ENCODE measurements at regions of chr1 and their contacts with region 1.

Region 1: GRCh38 chr1:9004700-9005394 is 21.4 kb downstream of the SLC2A7 start:
- DNase-seq: peak; percentile 29
- H3K4me3 ChIP-seq: no peak overlapping the region
- CTCF ChIP-seq: peak; percentile 97

Region 2: GRCh38 chr1:8858888-8859706 is 145.8 kb before region 1 on chr1:
- CTCF ChIA-PET with region 1: interaction called, 22 read pairs
- POLR2A ChIA-PET with region 1: no interaction called
- DNase-seq: no peak
- H3K4me3 ChIP-seq: no peak overlapping the region
- CTCF ChIP-seq: peak; percentile 60

Region 3: DNA sequence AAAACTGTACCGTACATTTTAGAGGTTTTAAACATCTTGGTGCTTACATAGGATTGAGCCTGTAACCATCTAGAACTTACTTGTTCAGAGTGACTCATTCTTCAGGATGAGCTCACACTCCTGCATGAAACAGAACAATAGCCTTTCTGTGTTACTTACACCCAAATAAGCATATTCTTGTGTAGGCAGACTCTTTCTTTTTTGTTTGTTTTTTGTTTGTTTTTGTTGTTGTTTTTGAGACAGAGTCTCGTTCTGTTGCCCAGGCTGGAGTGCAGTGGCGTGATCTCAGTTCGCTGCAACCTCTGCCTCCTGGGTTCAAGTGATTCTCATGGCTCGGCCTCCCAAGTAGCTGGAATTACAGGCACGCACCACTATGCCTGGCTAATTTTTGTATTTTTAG is 62.9 kb before region 1 on chr1:
- CTCF ChIA-PET with region 1: interaction called, 18 read pairs
- POLR2A ChIA-PET with region 1: no interaction called
- DNase-seq: peak; percentile 37
- H3K4me3 ChIP-seq: no peak overlapping the region
- CTCF ChIP-seq: no peak

Region 4: GRCh38 chr1:8987881-8988617 is 16.8 kb before region 1 on chr1:
- CTCF ChIA-PET with region 1: interaction called, 121 read pairs
- POLR2A ChIA-PET with region 1: no interaction called
- DNase-seq: no peak
- H3K4me3 ChIP-seq: no peak overlapping the region
- CTCF ChIP-seq: peak; percentile 86

Region 5: GRCh38 chr1:9025449-9025848 is 20.6 kb after region 1 on chr1:
- CTCF ChIA-PET with region 1: interaction called, 32 read pairs
- POLR2A ChIA-PET with region 1: no interaction called
- DNase-seq: no peak
- H3K4me3 ChIP-seq: no peak overlapping the region
- CTCF ChIP-seq: no peak

Region 6: GRCh38 chr1:9101510-9102146 is 96.8 kb after region 1 on chr1:
- CTCF ChIA-PET with region 1: interaction called, 157 read pairs
- POLR2A ChIA-PET with region 1: no interaction called
- DNase-seq: peak; percentile 16
- H3K4me3 ChIP-seq: no peak overlapping the region
- CTCF ChIP-seq: peak; percentile 87

Region 7: GRCh38 chr1:9651565-9652378 is 646.9 kb after region 1 on chr1 and contains the start of gene PIK3CD:
- CTCF ChIA-PET with region 1: no interaction called
- POLR2A ChIA-PET with region 1: no interaction called
- DNase-seq: no peak
- H3K4me3 ChIP-seq: peak within 1 kb of the TSS; percentile 54
- CTCF ChIP-seq: no peak

Measured in AG04449 (cell line).